ENCODE measurements at regions of chr10 and their contacts with region 1.

Region 1: DNA sequence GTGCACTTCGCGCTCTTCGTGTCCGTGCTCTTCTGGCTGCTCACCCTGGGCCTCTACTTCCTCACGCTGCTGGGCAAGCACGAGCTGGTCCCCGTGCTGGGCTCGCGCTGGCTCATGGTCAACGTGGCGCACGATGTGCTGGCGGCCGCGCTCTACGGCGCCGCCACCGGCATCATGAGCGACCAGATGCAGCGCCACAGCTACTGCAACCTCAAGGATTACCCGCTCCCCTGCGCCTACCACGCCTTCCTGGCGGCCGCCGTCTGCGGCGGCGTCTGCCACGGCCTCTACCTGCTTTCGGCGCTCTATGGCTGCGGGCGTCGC is 480 bp downstream of the MARVELD1 start:
- DNase-seq: peak; percentile 78

Region 2: DNA sequence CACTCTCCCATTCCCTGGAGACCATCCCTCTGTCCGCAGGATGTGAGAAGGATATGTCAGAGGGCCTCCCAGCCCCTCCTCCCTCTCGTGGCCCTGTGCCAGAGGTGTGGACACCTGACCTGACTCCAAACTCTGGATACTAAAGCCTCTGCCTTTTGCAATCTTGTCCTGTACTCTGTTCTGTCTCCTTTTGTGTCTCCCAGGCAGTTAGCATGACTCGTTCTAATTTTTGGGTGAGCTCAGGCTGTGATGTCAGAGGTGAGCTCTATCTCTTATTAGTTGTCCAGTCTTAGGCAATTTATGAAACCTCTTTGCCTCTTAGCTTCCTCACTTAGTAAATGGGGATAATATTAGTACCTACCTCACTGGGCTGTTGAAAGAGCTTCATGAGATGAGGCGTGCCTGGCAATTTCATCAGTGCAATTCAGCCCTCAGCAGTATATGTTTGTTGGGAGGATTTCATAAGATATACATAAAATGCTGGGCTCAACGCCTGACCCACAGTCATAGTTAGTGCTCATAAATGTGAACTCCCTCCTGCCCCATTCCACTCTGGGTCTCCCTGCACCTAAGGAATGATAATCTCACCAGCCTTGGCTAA is 10.4 kb after region 1 on chr10:
- CTCF ChIA-PET with region 1: interaction called, 19 read pairs
- POLR2A ChIA-PET with region 1: interaction called, 63 read pairs
- DNase-seq: no peak

Region 3: DNA sequence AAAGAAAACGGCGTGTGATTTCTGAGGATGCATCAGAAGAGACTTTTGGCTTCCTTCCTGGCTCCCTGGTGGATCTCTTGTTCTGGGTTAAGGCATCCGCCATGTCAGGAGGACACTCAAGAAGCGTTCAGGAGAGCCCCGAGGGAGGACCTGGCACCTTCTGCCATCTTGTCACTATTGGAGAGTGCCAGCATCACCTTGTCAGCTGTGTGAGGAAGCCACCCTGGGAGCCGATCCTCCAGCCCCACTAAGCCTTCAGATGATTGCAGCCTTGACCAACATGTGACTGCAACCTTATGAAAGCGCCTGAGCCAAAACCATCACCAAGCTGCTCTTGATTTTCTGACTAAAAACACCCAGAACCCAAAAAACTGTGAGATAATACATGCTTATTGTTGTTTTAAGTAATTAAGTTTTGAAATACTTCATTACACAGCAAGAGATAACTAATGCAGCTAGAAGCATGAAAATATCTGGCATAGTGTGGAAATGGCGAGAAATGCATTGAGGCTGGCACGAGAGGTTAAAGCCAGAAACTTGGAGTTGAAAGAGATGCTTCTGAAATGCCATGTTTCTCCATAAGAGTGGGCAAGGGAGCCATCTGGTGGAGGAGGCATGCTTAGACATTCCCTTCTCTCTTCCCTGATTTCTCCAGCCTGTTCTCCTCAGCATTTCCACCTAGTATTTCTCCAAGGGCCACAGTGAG is 17.5 kb after region 1 on chr10:
- CTCF ChIA-PET with region 1: interaction called, 14 read pairs
- POLR2A ChIA-PET with region 1: interaction called, 63 read pairs
- DNase-seq: peak; percentile 76

Region 4: GRCh38 chr10:97736902-97737769 is 23.1 kb after region 1 on chr10 and contains the start of gene ZFYVE27:
- CTCF ChIA-PET with region 1: interaction called, 12 read pairs
- POLR2A ChIA-PET with region 1: interaction called, 42 read pairs
- DNase-seq: peak; percentile 100

Region 5: GRCh38 chr10:98006266-98006665 is 292.3 kb after region 1 on chr10:
- CTCF ChIA-PET with region 1: no interaction called
- POLR2A ChIA-PET with region 1: no interaction called
- DNase-seq: no peak